Heart right ventricle (tissue), 16 donors: ENCODE measurements at regions of chr5 and their contacts with region 1.

Region 1: GRCh38 chr5:87412630-87413342 is at the start of gene CCNH:
- DNase-seq: peak; percentile 95 to 99
- ATAC-seq: peak; percentile 98 to 100 (median 99)
- H3K4me3 ChIP-seq: peak within 1 kb of the TSS; percentile 77 to 98 (median 87)
- H3K27ac ChIP-seq: peak within 1 kb of the TSS; percentile 96 to 100 (median 98)
- H3K4me1 ChIP-seq: peaks cover 0 to 43% (median 16%) of the 10 kb centered on the region in 9 donors
- H3K27me3 ChIP-seq: no peaks in the 10 kb centered on the region
- CTCF ChIP-seq: peak in 2 of 9 donors; percentile 6 to 10
- total RNA-seq, gene CCNH: 23.5 to 34.8 (median 24.5) TPM

Region 2: DNA sequence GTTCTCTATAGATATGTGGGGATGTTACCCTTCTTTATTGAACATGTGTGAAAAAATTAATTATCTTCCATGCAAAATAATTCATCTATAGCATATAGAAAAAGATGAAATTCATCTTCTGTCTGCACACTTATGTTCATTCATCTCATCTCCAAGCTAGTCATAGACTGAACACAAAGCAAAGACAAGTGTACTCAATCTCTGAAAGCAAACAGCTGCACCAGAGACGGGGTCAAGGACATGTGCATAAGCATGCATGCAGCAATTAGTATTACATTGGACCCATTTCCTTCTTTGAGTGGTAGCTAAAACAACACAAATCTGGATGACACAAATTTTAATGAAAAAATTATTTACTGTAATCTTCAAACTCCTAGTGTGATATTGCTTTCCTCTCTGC is 1342.1 kb before region 1 on chr5:
- intact Hi-C with region 1: no loop called
- DNase-seq: no peak
- ATAC-seq: no peak
- H3K4me3 ChIP-seq: no peak overlapping the region
- H3K27ac ChIP-seq: no peak overlapping the region
- H3K4me1 ChIP-seq: no peaks in the 10 kb centered on the region
- H3K27me3 ChIP-seq: no peaks in the 10 kb centered on the region
- CTCF ChIP-seq: no peak

Region 3: GRCh38 chr5:87347272-87347671 is 65.5 kb before region 1 on chr5:
- intact Hi-C with region 1: loop called in 1 of 10 experiments (anchors 2 kb)
- DNase-seq: no peak
- ATAC-seq: no peak
- H3K4me3 ChIP-seq: no peak overlapping the region
- H3K27ac ChIP-seq: no peak overlapping the region
- H3K4me1 ChIP-seq: no peaks in the 10 kb centered on the region
- H3K27me3 ChIP-seq: no peaks in the 10 kb centered on the region
- CTCF ChIP-seq: no peak

Region 4: GRCh38 chr5:87526131-87526530 is 113.3 kb after region 1 on chr5:
- intact Hi-C with region 1: no loop called
- DNase-seq: no peak
- ATAC-seq: no peak
- H3K4me3 ChIP-seq: no peak overlapping the region
- H3K27ac ChIP-seq: no peak overlapping the region
- H3K4me1 ChIP-seq: no peaks in the 10 kb centered on the region
- H3K27me3 ChIP-seq: no peaks in the 10 kb centered on the region
- CTCF ChIP-seq: no peak